Activated CD4-positive, alpha-beta memory T cell treated with anti-CD3 and anti-CD28 coated beads, Interleukin-2, amount 10 ng/mL, durations not matched to agents 7 days and 5 days (primary cell): ENCODE measurements at regions of chr6 and their contacts with region 1.

Region 1: GRCh38 chr6:73520688-73521350 is at the start of gene EEF1A1:
- DNase-seq: peak; percentile 100
- H3K4me3 Mint-ChIP-seq: peak within 1 kb of the TSS; percentile 89
- H3K27ac Mint-ChIP-seq: peak within 1 kb of the TSS; percentile 97
- H3K4me1 Mint-ChIP-seq: peaks cover 48% of the 10 kb centered on the region
- H3K27me3 Mint-ChIP-seq: no peaks in the 10 kb centered on the region
- total RNA-seq, gene EEF1A1: 7,440 to 7,455 TPM

Region 2: DNA sequence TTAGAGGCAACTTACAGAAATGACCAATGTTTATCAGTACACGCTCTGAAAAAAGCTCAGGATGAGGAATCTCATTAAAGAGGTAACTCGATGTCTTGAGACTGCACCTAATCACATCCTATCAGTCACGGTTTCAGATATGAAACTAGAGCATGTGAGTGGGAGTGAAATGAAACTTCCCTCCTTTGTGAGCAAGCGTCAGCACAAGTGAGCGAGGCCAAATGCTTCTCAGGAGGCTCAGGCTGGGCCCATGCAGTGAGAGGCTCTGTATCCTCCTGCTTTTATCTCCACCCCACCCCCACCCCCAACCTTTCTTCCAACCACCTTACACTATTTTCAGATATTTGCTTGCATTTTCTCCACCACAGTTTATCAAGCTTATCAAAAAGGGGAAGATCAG is 1775.3 kb before region 1 on chr6:
- CTCF ChIA-PET with region 1: no interaction called
- POLR2A ChIA-PET with region 1: no interaction called
- DNase-seq: no peak
- H3K4me3 Mint-ChIP-seq: no peak overlapping the region
- H3K27ac Mint-ChIP-seq: no peak overlapping the region
- H3K4me1 Mint-ChIP-seq: no peaks in the 10 kb centered on the region
- H3K27me3 Mint-ChIP-seq: no peaks in the 10 kb centered on the region

Region 3: GRCh38 chr6:73388800-73389512 is 131.9 kb before region 1 on chr6:
- CTCF ChIA-PET with region 1: interaction called, 3 read pairs
- POLR2A ChIA-PET with region 1: interaction called, 26 read pairs
- DNase-seq: peak; percentile 84
- H3K4me3 Mint-ChIP-seq: peak overlapping the region; percentile 80
- H3K27ac Mint-ChIP-seq: peak overlapping the region; percentile 89
- H3K4me1 Mint-ChIP-seq: peaks cover 37% of the 10 kb centered on the region
- H3K27me3 Mint-ChIP-seq: no peaks in the 10 kb centered on the region

Region 4: DNA sequence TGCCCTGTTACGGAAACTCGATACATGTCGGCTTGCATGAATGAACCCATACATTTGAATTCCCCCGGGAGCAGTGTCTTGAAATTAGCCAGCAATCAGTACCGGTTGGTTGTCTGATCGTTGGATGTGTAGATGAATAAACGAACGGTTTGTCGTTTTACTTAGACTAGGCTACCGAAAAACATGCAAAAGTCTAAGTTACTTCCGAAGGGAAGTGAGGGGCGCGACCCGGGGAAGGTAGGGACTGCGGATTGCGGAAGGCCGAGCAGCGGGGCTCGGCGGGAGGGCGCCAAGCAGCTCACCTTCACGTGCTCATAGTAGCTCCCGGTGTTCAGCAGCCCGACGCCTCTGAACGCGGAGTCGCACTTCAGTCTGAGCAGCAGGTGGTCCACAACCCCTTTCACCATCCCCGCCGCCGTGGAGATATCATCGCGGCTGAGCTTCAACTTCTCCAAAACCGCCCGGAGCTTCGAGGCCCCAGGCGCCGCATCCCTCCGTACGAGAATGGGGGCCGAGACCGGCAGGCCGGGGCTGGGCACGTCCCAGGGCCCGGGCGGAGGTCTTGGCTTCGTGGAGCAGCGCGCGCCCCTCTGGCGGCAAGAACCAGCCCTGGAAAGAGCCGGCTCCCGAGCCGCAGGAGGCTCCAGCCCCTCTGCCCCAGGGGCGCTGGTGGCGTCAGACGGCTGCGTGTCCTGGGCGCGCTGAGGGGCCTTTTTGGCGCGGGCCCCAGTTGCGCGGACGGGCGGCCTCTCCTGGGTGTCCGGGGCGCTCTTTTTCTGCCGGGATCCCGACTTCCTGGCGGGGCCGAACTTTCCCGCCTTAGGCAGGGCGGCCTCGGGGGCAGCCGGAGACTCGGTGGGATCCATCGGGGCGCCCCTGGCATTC is 69.4 kb before region 1 on chr6:
- CTCF ChIA-PET with region 1: interaction called, 4 read pairs
- POLR2A ChIA-PET with region 1: interaction called, 102 read pairs
- DNase-seq: peak; percentile 57
- H3K4me3 Mint-ChIP-seq: peak overlapping the region; percentile 95
- H3K27ac Mint-ChIP-seq: peak overlapping the region; percentile 86
- H3K4me1 Mint-ChIP-seq: peaks cover 50% of the 10 kb centered on the region
- H3K27me3 Mint-ChIP-seq: no peaks in the 10 kb centered on the region

Region 5: DNA sequence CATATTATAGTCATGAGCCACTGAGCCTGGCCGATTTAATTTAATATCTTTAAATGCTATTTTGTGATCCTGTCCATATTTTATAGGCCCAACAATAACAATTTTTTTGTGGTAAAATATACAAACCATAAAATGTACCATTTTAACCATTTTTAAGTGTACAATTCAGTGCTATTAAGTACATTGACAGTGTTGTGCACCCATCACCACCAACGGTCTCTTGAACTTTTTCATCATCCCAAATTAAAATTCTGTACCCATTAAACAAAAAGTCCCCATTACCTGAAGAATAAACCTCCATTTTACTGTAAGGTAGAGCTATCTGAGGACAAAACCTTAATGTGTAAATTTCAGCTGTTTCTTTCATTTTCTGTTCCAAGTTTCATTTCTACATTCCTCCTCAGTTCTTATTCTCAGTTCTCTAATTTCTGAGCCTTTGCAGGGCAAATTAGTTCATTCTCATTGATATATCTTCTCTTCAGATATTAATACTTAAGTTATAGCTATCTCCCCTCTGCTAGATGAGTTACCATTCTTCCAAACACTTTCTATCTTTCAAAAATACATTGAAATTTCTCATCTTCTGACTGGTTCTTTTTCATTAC is 49.0 kb before region 1 on chr6:
- CTCF ChIA-PET with region 1: interaction called, 3 read pairs
- POLR2A ChIA-PET with region 1: interaction called, 22 read pairs
- DNase-seq: no peak
- H3K4me3 Mint-ChIP-seq: peak overlapping the region; percentile 73
- H3K27ac Mint-ChIP-seq: peak overlapping the region; percentile 88
- H3K4me1 Mint-ChIP-seq: peaks cover 30% of the 10 kb centered on the region
- H3K27me3 Mint-ChIP-seq: no peaks in the 10 kb centered on the region

Region 6: DNA sequence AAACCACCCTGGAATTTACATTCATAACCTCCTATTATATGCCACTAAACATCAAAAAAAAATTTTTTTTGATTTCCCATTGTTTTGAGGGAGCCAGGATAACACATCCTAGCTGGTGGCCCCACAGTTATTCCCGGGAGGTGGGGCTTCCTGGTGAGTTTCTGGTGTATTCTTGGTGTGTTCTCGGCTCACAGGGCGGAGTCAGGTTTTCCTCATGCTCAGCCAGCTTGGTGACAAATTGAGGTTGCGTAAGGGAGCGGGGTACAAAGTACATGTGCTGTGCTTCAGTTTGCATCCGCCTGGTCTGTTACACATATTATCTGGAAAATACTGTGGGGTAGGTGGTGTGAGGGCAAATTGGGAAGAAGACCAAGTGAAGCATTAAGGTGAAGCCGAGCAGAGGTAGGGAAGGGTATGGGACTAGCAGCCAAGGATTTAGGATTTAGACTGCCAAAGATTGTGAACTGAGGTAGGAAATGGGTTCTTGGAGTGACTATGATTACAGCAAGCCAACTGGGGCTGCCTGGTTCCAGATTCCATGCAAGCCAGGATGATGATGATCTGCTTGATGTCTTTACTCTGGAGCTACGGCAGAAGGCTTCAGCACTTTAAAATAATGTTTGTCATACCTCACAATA is 46.3 kb after region 1 on chr6:
- CTCF ChIA-PET with region 1: no interaction called
- POLR2A ChIA-PET with region 1: no interaction called
- DNase-seq: no peak
- H3K4me3 Mint-ChIP-seq: no peak overlapping the region
- H3K27ac Mint-ChIP-seq: no peak overlapping the region
- H3K4me1 Mint-ChIP-seq: peaks cover 9% of the 10 kb centered on the region
- H3K27me3 Mint-ChIP-seq: no peaks in the 10 kb centered on the region

Region 7: DNA sequence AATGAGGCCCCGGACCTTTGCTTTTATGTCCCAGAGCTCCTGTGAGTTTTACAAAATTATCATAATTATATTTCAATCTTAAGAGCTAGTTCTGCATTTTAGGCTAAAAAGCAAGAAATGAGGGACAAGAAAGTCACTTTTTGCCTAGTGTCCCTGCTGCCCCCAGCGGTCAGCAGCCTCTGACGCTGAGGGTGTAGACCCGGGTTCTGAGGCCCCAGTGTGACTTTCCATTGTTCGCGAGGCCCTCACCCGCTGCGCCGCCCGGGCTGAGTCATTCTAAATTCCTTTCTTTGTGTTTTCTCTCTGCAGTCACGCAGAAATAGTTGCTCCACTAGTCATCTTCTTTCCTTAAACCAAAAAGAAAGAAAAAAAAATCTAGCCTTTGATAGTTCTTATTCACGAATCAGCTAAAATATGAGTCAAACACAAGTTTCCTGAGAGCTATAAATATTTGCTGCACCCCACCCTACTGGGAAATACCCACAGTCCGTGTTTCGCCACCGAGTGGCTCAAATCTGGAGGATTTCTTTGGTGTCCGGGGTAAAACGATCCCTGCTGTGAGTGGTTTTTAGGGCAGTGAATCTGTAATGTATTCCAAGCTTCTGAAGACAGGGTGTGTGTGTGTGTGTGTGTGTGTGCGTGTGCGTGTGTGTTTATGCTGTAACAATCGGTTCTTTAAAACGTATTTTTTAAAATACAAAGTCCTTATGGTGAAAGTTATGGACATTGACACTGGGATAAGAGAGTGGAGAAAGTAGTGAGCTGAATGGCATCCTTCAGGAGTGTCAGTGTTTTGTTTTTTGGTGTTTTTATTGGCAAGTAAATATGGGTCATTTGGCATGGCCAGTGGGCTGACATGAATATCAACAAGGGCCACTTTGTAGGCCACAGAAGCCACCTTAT is 59.7 kb after region 1 on chr6:
- CTCF ChIA-PET with region 1: interaction called, 22 read pairs
- POLR2A ChIA-PET with region 1: interaction called, 143 read pairs
- DNase-seq: peak; percentile 70
- H3K4me3 Mint-ChIP-seq: peak overlapping the region; percentile 65
- H3K27ac Mint-ChIP-seq: peak overlapping the region; percentile 91
- H3K4me1 Mint-ChIP-seq: peaks cover 31% of the 10 kb centered on the region
- H3K27me3 Mint-ChIP-seq: no peaks in the 10 kb centered on the region

Region 8: GRCh38 chr6:73585566-73586415 is 65.0 kb after region 1 on chr6:
- CTCF ChIA-PET with region 1: interaction called, 22 read pairs
- POLR2A ChIA-PET with region 1: interaction called, 143 read pairs
- DNase-seq: peak; percentile 34
- H3K4me3 Mint-ChIP-seq: peak overlapping the region; percentile 70
- H3K27ac Mint-ChIP-seq: peak overlapping the region; percentile 93
- H3K4me1 Mint-ChIP-seq: peaks cover 27% of the 10 kb centered on the region
- H3K27me3 Mint-ChIP-seq: no peaks in the 10 kb centered on the region

Region 9: DNA sequence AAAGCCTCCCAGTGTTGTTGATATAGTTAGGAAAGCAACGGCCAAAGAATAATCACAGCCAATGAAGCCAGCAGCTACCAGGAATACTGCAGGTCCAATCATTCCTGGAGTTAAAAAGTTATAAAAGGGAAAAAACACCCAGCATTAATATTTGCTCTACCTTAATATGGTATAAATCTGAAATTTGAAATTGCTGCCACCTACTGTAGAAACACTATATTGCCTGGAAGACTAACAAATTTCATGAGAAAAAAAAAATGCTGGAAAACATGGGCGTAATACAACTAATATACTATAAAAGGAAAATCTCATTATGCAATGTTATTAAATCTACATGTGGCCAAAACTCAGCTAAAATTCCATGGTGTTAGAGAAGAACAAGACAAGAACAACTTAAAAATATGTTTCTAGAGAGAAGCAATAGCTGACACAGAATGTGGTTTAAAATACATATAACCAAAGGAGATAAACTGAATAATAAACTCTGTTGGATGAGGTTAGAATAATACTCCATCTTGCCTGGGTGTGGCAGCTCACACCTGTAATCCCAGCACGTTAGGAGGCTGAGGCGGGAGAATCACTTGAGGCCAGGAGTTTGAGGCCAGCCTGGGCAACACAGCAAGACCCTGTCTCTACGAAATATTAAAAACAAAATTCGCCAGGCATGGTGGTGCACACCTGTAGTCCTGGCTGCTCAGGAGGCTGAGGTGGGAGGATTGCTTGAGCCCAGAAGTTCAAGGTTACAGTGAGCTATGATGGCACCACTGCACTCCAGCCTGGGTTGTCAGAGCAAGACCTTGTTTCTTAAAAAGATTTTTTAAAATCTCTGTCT is 89.8 kb after region 1 on chr6:
- CTCF ChIA-PET with region 1: interaction called, 53 read pairs
- POLR2A ChIA-PET with region 1: interaction called, 191 read pairs
- DNase-seq: no peak
- H3K4me3 Mint-ChIP-seq: no peak overlapping the region
- H3K27ac Mint-ChIP-seq: no peak overlapping the region
- H3K4me1 Mint-ChIP-seq: peaks cover 2% of the 10 kb centered on the region
- H3K27me3 Mint-ChIP-seq: no peaks in the 10 kb centered on the region

Region 10: DNA sequence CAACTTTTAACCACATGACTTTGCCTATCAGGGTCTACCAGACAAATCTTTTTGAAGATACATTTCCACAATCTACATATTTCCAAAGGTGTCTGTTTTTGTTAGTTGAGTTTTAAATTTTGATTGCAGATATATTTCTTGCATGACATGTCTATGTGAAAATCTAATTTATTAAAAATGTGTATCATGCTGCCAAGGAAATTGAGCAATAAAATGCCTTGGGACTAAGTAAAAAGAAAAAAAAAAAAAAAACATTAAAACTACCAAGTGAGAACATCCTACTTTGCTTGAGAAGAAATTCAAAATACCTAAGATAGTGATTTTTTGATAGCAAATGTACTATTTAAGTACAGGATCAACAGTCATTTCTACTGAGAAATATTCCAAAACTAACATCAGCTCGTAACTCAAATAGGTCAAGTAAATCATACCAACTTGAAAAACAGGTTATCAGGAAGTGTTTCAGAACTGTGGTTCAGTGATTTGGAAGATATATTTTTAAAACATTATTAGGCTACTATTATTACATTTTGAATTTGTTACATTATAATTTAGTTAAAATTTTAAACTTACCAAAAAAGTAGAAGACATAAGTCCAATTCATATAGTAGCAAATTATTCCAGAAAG is 115.3 kb after region 1 on chr6:
- CTCF ChIA-PET with region 1: no interaction called
- POLR2A ChIA-PET with region 1: no interaction called
- DNase-seq: no peak
- H3K4me3 Mint-ChIP-seq: no peak overlapping the region
- H3K27ac Mint-ChIP-seq: no peak overlapping the region
- H3K4me1 Mint-ChIP-seq: peaks cover 2% of the 10 kb centered on the region
- H3K27me3 Mint-ChIP-seq: no peaks in the 10 kb centered on the region

Region 11: GRCh38 chr6:73832313-73832712 is 311.5 kb after region 1 on chr6:
- CTCF ChIA-PET with region 1: no interaction called
- POLR2A ChIA-PET with region 1: no interaction called
- DNase-seq: no peak
- H3K4me3 Mint-ChIP-seq: no peak overlapping the region
- H3K27ac Mint-ChIP-seq: no peak overlapping the region
- H3K4me1 Mint-ChIP-seq: no peaks in the 10 kb centered on the region
- H3K27me3 Mint-ChIP-seq: no peaks in the 10 kb centered on the region